MCF 10A (cell line): ENCODE measurements at regions of chr9 and their contacts with region 1.

Region 1: DNA sequence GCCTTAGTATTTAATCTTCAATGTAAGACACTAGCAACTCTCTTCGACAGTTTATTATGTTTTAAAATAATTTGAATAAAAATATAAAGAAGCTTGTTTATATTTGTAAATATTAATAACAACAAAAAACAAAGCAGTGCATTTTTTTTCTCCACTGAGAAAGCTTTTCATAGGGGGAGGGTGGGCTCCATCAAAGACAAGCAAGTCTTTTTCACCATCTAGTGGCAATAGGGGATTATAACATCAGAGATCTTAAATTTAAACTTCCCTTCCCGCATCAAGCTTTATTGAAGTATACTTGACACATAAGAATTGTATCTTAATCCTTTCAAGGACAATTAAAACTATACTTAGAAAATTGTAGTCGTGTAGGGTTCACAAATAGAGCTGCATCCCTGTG is 9.3 kb upstream of the OR13F1 start:
- DNase-seq: peak; percentile 6
- H3K4me3 Mint-ChIP-seq: no peak overlapping the region
- H3K27ac Mint-ChIP-seq: no peak overlapping the region
- H3K4me1 Mint-ChIP-seq: no peaks in the 10 kb centered on the region
- H3K27me3 Mint-ChIP-seq: no peaks in the 10 kb centered on the region
- CTCF ChIP-seq: peak; percentile 42

Region 2: GRCh38 chr9:104177003-104177611 is 317.7 kb before region 1 on chr9:
- CTCF ChIA-PET with region 1: interaction called, 26 read pairs
- POLR2A ChIA-PET with region 1: no interaction called
- intact Hi-C with region 1: loop called (anchors 2 kb)
- DNase-seq: peak; percentile 53
- H3K4me3 Mint-ChIP-seq: no peak overlapping the region
- H3K27ac Mint-ChIP-seq: no peak overlapping the region
- H3K4me1 Mint-ChIP-seq: no peaks in the 10 kb centered on the region
- H3K27me3 Mint-ChIP-seq: no peaks in the 10 kb centered on the region
- CTCF ChIP-seq: peak; percentile 58

Region 3: DNA sequence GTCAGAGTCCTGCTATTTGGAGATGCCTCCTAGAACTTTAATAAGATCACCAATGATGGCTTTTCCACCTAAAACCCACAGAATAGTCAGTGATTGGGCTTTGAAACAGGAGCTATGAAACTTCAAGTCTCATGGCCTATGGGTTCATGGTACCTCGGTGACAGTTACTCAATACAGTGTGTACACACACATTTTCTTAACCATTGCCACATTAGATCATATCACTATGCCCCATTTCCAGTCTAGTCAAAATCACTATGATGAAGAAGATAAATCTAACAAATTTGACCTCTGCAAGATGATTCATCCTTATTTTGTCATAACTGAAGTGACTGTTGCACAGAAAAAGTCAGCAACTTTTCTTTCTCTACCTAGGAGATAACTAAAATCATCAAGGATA is 77.5 kb before region 1 on chr9:
- CTCF ChIA-PET with region 1: no interaction called
- POLR2A ChIA-PET with region 1: no interaction called
- intact Hi-C with region 1: no loop called
- DNase-seq: no peak
- H3K4me3 Mint-ChIP-seq: no peak overlapping the region
- H3K27ac Mint-ChIP-seq: no peak overlapping the region
- H3K4me1 Mint-ChIP-seq: no peaks in the 10 kb centered on the region
- H3K27me3 Mint-ChIP-seq: no peaks in the 10 kb centered on the region
- CTCF ChIP-seq: no peak

Region 4: GRCh38 chr9:104682642-104683041 is 187.8 kb after region 1 on chr9:
- CTCF ChIA-PET with region 1: interaction called, 3 read pairs
- POLR2A ChIA-PET with region 1: no interaction called
- intact Hi-C with region 1: loop called (anchors 1 kb)
- DNase-seq: peak; percentile 78
- H3K4me3 Mint-ChIP-seq: no peak overlapping the region
- H3K27ac Mint-ChIP-seq: no peak overlapping the region
- H3K4me1 Mint-ChIP-seq: no peaks in the 10 kb centered on the region
- H3K27me3 Mint-ChIP-seq: no peaks in the 10 kb centered on the region
- CTCF ChIP-seq: peak; percentile 53